Astrocyte of the cerebellum (primary cell): ENCODE measurements at regions of chr10 and their contacts with region 1.

Region 1: DNA sequence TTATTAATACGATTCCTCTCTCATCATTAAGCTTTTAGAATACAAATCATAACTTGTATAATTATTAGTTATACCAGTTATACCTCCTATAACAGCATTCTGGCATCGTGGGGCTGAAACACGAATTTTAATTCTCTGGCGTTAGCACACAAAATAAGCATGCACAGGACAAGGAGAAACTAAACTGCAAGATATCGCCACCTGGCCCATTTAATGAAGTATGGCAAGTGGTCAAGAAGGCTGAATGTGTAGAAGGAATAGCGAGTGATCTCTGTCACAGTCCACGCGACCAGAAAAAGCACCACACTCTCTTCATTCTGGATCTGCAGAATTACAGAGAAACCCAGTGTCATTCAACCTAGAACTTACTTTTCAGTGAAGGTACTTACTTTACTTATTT is 18.1 kb downstream of the HACD1 start:
- DNase-seq: peak; percentile 39
- H3K4me3 ChIP-seq: no peak overlapping the region
- CTCF ChIP-seq: peak; percentile 62

Region 2: GRCh38 chr10:16828114-16828568 is 770.9 kb before region 1 on chr10:
- in situ Hi-C with region 1: loop called (anchors 25 kb)
- DNase-seq: peak; percentile 88
- H3K4me3 ChIP-seq: no peak overlapping the region
- CTCF ChIP-seq: peak; percentile 54

Region 3: GRCh38 chr10:17290226-17290625 is 308.9 kb before region 1 on chr10:
- in situ Hi-C with region 1: loop called (anchors 25 kb)
- DNase-seq: no peak
- H3K4me3 ChIP-seq: no peak overlapping the region
- CTCF ChIP-seq: peak; percentile 33

Region 4: DNA sequence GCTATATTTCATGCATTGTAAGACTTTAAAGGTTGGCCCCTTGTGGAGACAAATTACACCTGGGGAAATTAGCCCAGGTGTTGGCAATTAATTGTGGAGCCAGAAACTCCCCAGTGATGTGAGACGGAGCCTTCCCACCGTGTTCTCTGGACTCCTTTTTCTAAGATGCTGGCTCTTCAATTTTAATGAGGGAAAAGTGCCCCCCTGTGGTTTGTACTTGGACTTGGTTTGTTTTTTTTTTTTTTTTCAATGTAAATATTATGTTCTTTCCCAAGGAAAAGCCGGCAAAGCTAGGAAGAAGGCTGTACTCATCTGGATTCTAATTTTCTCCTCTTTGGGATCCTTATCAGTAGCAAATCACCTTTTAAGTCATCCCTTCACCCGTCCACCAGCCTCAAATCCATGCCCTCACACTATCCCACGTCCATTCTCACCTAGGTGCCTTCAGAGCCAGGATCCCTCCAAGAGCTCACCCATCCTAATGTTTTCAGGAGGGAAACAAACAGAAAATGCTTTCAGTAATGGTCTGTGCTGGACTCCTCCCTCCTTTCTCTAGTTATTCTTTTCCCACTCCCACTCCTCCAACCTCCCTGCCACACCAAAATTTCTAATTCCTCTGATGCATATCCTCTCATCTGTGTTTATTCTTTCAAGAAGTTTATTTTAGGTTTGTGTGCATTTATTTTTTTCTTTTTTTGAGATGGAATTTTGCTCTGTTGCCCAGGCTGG is 124.3 kb before region 1 on chr10:
- in situ Hi-C with region 1: loop called (anchors 25 kb)
- DNase-seq: no peak
- H3K4me3 ChIP-seq: no peak overlapping the region
- CTCF ChIP-seq: no peak